Posterior cingulate gyrus (tissue), 11 donors: ENCODE measurements at regions of chr13 and their contacts with region 1.

Region 1: GRCh38 chr13:30306762-30307193 is 573 bp downstream of the KATNAL1 start:
- DNase-seq: peak; percentile 91 to 99 (median 94)

Region 2: GRCh38 chr13:30394751-30395191 is 88.0 kb after region 1 on chr13:
- intact Hi-C with region 1: loop called (anchors 1 kb)
- DNase-seq: no peak

Region 3: GRCh38 chr13:30453727-30454126 is 146.9 kb after region 1 on chr13:
- intact Hi-C with region 1: no loop called
- DNase-seq: no peak

Region 4: GRCh38 chr13:31213651-31214289 is 907.0 kb after region 1 on chr13:
- intact Hi-C with region 1: no loop called
- DNase-seq: no peak